Activated naive CD4-positive, alpha-beta T cell treated with anti-CD3 and anti-CD28 coated beads, Interleukin-2, amount 10 ng/mL, durations not matched to agents 7 days and 5 days (primary cell): ENCODE measurements at regions of chr14 and their contacts with region 1.

Region 1: GRCh38 chr14:74905375-74906142 is 17.5 kb downstream of the RPS6KL1 start:
- DNase-seq: peak; percentile 84
- H3K4me3 Mint-ChIP-seq: no peak overlapping the region
- H3K27ac Mint-ChIP-seq: peak overlapping the region; percentile 29
- H3K4me1 Mint-ChIP-seq: peaks cover 6% of the 10 kb centered on the region
- H3K27me3 Mint-ChIP-seq: no peaks in the 10 kb centered on the region

Region 2: GRCh38 chr14:74867673-74868072 is 37.9 kb before region 1 on chr14:
- CTCF ChIA-PET with region 1: interaction called, 395 read pairs
- DNase-seq: peak; percentile 72
- H3K4me3 Mint-ChIP-seq: no peak overlapping the region
- H3K27ac Mint-ChIP-seq: peak overlapping the region; percentile 68
- H3K4me1 Mint-ChIP-seq: peaks cover 19% of the 10 kb centered on the region
- H3K27me3 Mint-ChIP-seq: peaks cover 11% of the 10 kb centered on the region

Region 3: GRCh38 chr14:74881431-74882361 is 23.9 kb before region 1 on chr14 and contains the start of gene DLST:
- CTCF ChIA-PET with region 1: interaction called, 44 read pairs
- DNase-seq: peak; percentile 89
- H3K4me3 Mint-ChIP-seq: peak within 1 kb of the TSS; percentile 99
- H3K27ac Mint-ChIP-seq: peak within 1 kb of the TSS; percentile 99
- H3K4me1 Mint-ChIP-seq: peaks cover 55% of the 10 kb centered on the region
- H3K27me3 Mint-ChIP-seq: no peaks in the 10 kb centered on the region

Region 4: DNA sequence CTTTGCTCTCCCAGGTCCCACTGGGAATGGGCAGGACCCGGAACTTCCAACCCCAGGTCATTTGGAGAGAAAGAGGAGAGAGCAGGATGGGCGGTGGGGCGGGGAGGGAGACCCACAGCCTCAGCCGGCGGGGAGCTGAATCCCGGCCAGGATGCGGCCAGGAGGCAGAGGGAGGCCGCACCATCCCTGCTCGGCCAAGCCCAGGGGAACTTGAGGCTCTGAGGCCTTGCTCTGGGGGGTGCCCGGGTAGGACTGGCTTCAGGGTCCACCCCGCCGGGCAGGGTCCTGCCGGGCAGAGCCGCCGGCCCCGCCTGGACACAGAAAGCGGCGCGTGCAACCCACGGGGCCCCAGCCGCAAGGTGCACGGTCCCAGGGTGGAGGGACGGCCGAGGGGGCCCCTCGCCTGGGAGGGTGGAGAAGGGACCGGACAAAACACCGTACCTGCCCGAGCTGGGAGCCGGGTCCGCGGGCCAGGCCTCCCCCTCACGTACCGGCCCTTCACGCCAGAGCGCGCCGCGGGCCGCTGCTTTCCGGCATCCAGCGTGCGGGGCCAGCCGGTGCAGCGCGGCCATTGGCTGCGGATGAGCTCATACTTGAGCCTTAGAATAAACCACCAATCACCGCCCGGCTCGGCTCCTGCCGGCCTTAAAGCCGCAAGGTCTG is 17.3 kb after region 1 on chr14 and contains the start of gene RPS6KL1:
- CTCF ChIA-PET with region 1: interaction called, 24 read pairs
- DNase-seq: peak; percentile 88
- H3K4me3 Mint-ChIP-seq: peak within 1 kb of the TSS; percentile 69
- H3K27ac Mint-ChIP-seq: no peak within 1 kb of the TSS
- H3K4me1 Mint-ChIP-seq: peaks cover 13% of the 10 kb centered on the region
- H3K27me3 Mint-ChIP-seq: peaks cover 29% of the 10 kb centered on the region

Region 5: DNA sequence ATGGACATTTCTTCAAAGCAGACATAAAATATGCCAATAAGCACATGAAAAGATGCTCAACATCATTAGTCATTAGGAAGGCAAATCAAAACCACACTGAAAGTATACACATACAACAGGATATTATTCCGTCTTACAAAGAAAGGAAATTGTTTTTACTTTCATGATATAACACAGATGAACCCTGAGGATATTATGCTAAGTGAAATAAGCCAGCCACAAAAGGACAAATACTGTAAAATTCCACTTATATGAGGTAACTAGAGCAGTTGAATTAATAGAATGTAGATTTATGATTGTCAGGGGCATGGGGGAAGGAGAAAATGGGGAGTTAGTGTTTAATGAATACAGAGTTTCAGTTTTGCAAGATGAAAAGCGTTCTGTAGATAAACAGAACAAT is 154.1 kb after region 1 on chr14:
- CTCF ChIA-PET with region 1: no interaction called
- DNase-seq: no peak
- H3K4me3 Mint-ChIP-seq: no peak overlapping the region
- H3K27ac Mint-ChIP-seq: no peak overlapping the region
- H3K4me1 Mint-ChIP-seq: peaks cover 59% of the 10 kb centered on the region
- H3K27me3 Mint-ChIP-seq: no peaks in the 10 kb centered on the region